HEK293 (cell line): ENCODE measurements at regions of chr4 and their contacts with region 1.

Region 1: GRCh38 chr4:146095091-146095690 is 80.3 kb upstream of the LSM6 start:
- H3K4me3 ChIP-seq: no peak overlapping the region
- H3K27ac ChIP-seq: no peak overlapping the region
- H3K4me1 ChIP-seq: no peaks in the 10 kb centered on the region
- CTCF ChIP-seq: no peak

Region 2: GRCh38 chr4:145861336-145862318 is 233.6 kb before region 1 on chr4:
- CTCF ChIA-PET with region 1: no interaction called
- POLR2A ChIA-PET with region 1: no interaction called
- H3K4me3 ChIP-seq: no peak overlapping the region
- H3K27ac ChIP-seq: no peak overlapping the region
- H3K4me1 ChIP-seq: no peaks in the 10 kb centered on the region
- CTCF ChIP-seq: no peak

Region 3: GRCh38 chr4:146076081-146076480 is 19.1 kb before region 1 on chr4:
- CTCF ChIA-PET with region 1: interaction called, 10 read pairs
- POLR2A ChIA-PET with region 1: no interaction called
- H3K4me3 ChIP-seq: no peak overlapping the region
- H3K27ac ChIP-seq: no peak overlapping the region
- H3K4me1 ChIP-seq: no peaks in the 10 kb centered on the region
- CTCF ChIP-seq: no peak

Region 4: DNA sequence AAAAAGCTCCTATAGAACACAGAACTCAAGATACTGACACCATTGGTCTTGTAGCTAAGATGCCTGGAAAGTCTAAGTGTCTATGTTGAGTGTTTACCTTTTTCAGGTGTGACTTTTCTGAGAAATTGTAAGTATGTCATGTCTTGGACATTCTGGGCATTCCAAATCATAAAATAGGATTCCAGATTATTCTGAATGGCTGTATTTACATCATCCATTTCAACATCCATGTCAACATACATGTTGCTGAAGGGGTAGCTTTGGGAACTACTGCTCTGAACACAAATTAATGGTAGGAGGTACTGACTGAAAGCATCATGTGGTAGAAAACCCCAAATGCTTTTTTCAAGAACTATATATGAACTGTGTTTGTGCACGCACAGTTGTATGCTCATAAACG is 11.4 kb after region 1 on chr4:
- CTCF ChIA-PET with region 1: interaction called, 12 read pairs
- POLR2A ChIA-PET with region 1: no interaction called
- H3K4me3 ChIP-seq: no peak overlapping the region
- H3K27ac ChIP-seq: no peak overlapping the region
- H3K4me1 ChIP-seq: no peaks in the 10 kb centered on the region
- CTCF ChIP-seq: no peak